Calu3 (cell line): ENCODE measurements at regions of chr13 and their contacts with region 1.

Region 1: GRCh38 chr13:19959831-19960652 is 1.5 kb downstream of the ZMYM2 start:
- DNase-seq: peak; percentile 76
- H3K4me3 Mint-ChIP-seq: peak overlapping the region; percentile 77
- H3K27ac Mint-ChIP-seq: peak overlapping the region; percentile 64
- H3K4me1 Mint-ChIP-seq: no peaks in the 10 kb centered on the region
- H3K27me3 Mint-ChIP-seq: no peaks in the 10 kb centered on the region
- CTCF ChIP-seq: peak; percentile 61

Region 2: DNA sequence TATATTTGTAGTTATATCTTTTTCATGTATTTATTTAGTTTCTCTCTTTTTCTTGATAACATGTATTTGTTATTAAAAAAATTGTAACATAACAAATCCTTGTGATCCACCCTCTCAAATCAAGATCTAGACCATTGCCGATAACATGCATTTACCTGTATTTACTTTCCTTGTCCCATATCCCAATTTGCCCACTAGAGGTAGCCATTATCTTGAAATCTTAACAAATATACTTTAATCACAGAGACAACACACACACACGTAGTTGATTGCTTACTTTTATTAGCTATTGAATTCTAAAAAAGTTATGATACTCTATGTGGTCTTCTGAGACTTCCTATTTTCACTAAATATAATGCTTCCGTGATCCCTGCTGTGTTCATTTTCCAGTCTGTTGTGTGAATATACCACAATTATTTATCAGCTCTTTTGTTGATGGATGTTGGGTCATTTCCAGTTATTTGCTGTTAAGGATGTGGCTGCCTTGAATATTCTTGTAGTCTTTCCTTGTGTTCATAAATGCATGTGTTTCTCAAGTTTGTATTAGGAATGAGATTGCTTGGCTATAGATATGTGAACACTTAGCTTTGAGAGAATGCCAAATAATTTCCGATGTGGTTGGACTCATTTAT is 32.8 kb before region 1 on chr13:
- CTCF ChIA-PET with region 1: interaction called, 8 read pairs
- intact Hi-C with region 1: loop called (anchors 2 kb)
- DNase-seq: no peak
- H3K4me3 Mint-ChIP-seq: no peak overlapping the region
- H3K27ac Mint-ChIP-seq: no peak overlapping the region
- H3K4me1 Mint-ChIP-seq: peaks cover 8% of the 10 kb centered on the region
- H3K27me3 Mint-ChIP-seq: no peaks in the 10 kb centered on the region
- CTCF ChIP-seq: no peak

Region 3: GRCh38 chr13:20301403-20302071 is 341.5 kb after region 1 on chr13:
- CTCF ChIA-PET with region 1: no interaction called
- intact Hi-C with region 1: no loop called
- DNase-seq: no peak
- H3K4me3 Mint-ChIP-seq: no peak overlapping the region
- H3K27ac Mint-ChIP-seq: no peak overlapping the region
- H3K4me1 Mint-ChIP-seq: no peaks in the 10 kb centered on the region
- H3K27me3 Mint-ChIP-seq: peaks cover 65% of the 10 kb centered on the region
- CTCF ChIP-seq: no peak